Activated T-helper 1 cell treated with anti-CD3 and anti-CD28 coated beads, Interleukin-12 subunit alpha, Interleukin-12 subunit beta, Interleukin-2, Interleukin-4 antibody, amounts not matched to agents 30 ng/mL and 10 ng/mL and 1 ng/mL, durations not matched to agents 14 hours and 24 hours and 36 hours (primary cell): ENCODE measurements at regions of chr17 and their contacts with region 1.

Region 1: DNA sequence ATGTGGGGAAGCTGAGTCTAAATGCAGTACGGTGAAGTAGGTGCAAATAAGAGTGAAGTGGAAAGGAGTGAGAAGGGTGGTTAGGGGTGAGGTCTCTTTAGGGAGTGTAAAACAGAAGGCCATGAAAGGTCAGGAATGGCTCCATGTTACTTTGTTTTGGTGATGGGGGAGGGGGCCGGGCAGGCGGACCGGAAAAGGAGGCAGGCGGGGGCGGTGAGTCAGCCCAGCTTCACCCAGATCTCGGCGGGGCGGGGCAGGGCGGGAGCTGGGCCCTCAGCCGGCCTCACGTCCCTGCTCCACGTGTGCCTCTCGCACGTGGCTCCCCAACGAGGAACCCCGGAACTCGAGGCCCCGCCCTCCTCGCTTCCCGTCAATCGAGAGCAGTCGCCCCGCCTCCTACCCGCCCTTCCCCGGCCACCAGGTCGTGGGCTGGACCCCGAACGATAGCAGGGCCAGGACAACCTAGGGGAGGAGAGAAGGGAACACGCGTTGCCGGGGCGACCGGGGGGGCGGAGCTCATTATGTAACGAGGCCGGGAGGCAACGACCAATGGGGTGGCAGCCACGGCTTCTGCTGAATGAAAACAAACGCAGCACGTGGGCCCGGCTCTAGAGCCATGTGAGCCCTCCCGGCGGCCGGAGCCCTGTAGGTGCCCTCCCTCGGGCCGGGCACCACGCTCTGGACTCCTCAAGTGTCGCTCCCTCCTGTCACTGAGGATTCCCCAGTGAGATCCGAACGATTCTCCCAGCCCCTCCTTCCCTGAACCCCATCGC is 1.4 kb downstream of the NR1D1 start:
- DNase-seq: peak; percentile 86
- H3K4me3 Mint-ChIP-seq: peak overlapping the region; percentile 92
- H3K27ac Mint-ChIP-seq: peak overlapping the region; percentile 85
- H3K4me1 Mint-ChIP-seq: peaks cover 81% of the 10 kb centered on the region
- H3K27me3 Mint-ChIP-seq: peaks cover 11% of the 10 kb centered on the region

Region 2: DNA sequence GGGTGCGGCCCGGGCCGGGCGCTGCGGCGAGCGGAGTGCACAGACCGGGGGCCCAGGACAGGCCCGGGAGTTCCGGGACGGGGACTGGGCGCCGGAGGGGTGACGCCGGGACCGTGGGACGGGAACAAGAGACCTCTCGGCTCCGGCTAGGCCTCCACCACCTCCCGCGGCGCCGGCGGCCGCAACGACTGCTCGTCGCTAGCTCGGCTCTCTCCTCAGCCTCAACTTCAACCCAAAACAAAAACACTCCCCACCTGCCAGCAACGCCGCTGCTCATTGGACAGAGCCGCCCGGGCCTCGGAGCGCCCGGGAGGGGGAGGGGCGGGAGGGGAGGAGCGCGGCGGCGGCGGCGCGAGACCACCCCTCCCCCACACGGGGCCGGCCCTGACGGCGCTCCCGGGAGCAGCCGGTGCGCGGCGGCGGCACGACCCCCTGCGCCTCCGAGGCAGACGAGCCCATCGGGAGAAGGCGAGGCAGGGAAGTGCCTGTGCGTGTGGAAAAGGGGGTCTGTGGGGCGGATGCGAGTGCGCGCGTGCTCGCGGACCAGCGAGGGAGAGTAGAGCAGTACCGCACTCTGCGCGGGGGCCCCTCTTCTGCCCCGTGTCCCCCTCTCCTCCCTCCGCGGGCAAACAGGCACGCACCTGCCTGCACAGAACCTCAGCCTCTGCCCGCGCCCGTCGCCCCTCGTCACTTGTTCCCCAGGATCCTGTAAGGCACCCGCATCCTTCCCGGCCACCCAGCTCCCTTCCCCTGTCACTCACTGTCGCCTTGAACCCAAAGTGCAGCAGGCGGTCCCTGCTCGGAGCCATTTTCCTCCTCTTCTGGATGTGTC is 697.4 kb before region 1 on chr17 and contains the start of gene FBXL20:
- intact Hi-C with region 1: loop called (anchors 5 kb)
- DNase-seq: peak; percentile 84
- H3K4me3 Mint-ChIP-seq: peak within 1 kb of the TSS; percentile 94
- H3K27ac Mint-ChIP-seq: peak within 1 kb of the TSS; percentile 98
- H3K4me1 Mint-ChIP-seq: peaks cover 40% of the 10 kb centered on the region
- H3K27me3 Mint-ChIP-seq: no peaks in the 10 kb centered on the region
- total RNA-seq, gene FBXL20: 20.1 and 25.6 TPM in 2 replicates

Region 3: GRCh38 chr17:40068917-40069750 is 29.9 kb before region 1 on chr17:
- intact Hi-C with region 1: loop called (anchors 2 kb)
- DNase-seq: peak; percentile 55
- H3K4me3 Mint-ChIP-seq: peak overlapping the region; percentile 77
- H3K27ac Mint-ChIP-seq: peak overlapping the region; percentile 79
- H3K4me1 Mint-ChIP-seq: peaks cover 44% of the 10 kb centered on the region
- H3K27me3 Mint-ChIP-seq: peaks cover 17% of the 10 kb centered on the region

Region 4: GRCh38 chr17:40139566-40140058 is 40.6 kb after region 1 on chr17:
- intact Hi-C with region 1: loop called (anchors 1 kb)
- DNase-seq: no peak
- H3K4me3 Mint-ChIP-seq: peak overlapping the region; percentile 98
- H3K27ac Mint-ChIP-seq: peak overlapping the region; percentile 98
- H3K4me1 Mint-ChIP-seq: peaks cover 34% of the 10 kb centered on the region
- H3K27me3 Mint-ChIP-seq: peaks cover 2% of the 10 kb centered on the region

Region 5: DNA sequence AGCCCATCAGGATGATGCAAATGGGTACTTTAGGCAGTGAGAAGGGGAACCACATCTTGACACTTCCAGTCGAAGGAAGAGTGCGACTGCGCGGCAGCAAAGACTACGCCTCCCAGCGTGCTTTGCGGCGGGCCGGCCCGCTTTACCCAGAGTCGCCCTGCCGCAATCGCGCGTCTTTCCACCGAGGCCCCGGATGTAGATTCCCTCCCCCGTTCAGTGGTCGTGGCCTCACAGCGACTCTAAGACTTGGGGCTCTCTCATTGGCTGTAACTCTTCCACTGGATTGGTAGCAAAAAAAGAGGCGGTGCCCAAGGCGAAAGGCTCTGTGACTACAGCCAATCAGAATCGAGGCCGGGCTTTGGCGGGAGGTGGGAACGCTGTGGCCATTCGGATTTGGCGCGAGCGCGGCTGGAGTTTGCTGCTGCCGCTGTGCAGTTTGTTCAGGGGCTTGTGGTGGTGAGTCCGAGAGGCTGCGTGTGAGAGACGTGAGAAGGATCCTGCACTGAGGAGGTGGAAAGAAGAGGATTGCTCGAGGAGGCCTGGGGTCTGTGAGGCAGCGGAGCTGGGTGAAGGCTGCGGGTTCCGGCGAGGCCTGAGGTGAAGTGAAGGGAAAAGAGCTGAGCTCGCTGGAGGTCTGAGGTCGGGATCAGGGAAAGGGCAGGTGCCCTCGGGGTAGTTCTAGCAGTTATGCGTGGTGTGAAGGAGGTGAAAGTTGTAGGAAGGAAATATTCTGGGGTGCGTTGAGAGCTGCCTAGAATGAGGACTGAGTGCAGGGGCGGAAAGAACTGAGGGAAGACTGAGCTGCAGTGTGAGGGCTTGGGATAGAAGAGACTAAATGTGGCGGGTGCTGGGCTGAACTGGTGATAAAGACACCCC is 188.7 kb after region 1 on chr17 and contains the start of gene CDC6:
- intact Hi-C with region 1: loop called (anchors 1 kb)
- DNase-seq: peak; percentile 98
- H3K4me3 Mint-ChIP-seq: peak within 1 kb of the TSS; percentile 99
- H3K27ac Mint-ChIP-seq: peak within 1 kb of the TSS; percentile 98
- H3K4me1 Mint-ChIP-seq: peaks cover 39% of the 10 kb centered on the region
- H3K27me3 Mint-ChIP-seq: no peaks in the 10 kb centered on the region
- total RNA-seq, gene CDC6: 130 and 135 TPM in 2 replicates